Activated CD8-positive, alpha-beta memory T cell treated with anti-CD3 and anti-CD28 coated beads, Interleukin-2, amount 10 ng/mL, durations not matched to agents 7 days and 5 days (primary cell): ENCODE measurements at regions of chr5 and their contacts with region 1.

Region 1: DNA sequence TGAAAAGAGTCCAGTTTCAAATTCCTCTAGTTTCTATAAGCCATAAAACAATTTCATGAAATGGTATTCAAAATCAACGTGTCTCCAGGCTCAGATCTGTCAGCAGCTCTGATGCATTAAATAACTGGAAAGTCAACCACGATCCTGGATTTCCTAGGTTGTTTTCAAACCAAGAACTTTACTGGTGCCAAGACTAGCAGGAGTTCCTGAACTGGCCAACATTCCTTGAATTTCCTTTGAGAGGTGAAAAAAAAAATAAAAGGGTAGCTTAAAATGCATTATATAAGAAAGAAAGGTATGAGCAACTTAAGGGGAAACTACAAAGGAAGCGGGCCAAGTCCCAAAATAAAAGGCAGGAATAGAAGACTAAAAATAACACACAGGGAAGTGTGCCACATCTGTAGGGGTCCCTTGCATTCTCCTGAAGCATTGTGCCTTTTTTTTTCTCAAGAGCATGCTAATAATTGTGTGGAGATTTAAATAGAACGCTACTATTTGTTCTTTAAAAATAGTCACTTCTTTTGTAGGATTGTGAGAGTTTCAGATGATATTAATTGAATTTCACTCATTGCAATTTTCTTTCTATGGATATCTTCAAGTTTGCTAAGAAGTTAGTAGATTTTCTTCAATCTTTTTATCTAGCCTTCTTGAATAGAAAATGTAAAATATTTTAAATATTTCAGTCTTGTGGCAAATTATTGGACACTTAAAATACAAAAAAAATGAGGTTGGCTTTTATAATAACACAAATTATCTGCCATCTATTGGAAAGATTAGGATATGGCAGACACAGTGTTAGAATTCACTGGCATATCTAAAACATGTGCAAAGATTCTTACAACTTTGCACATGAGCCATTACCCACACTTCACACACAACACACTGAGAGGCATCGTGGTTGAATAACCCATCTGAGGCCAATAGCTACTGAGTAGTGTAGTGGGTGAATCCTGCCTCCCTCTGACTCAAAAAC is 15.3 kb downstream of the ESM1 start:
- DNase-seq: no peak
- ATAC-seq: no peak
- H3K4me3 Mint-ChIP-seq: no peak overlapping the region
- H3K27ac Mint-ChIP-seq: no peak overlapping the region
- H3K4me1 Mint-ChIP-seq: no peaks in the 10 kb centered on the region
- H3K27me3 Mint-ChIP-seq: peaks cover 3% of the 10 kb centered on the region

Region 2: GRCh38 chr5:54713923-54714581 is 256.1 kb before region 1 on chr5:
- CTCF ChIA-PET with region 1: no interaction called
- DNase-seq: no peak
- ATAC-seq: no peak
- H3K4me3 Mint-ChIP-seq: no peak overlapping the region
- H3K27ac Mint-ChIP-seq: no peak overlapping the region
- H3K4me1 Mint-ChIP-seq: peaks cover 23% of the 10 kb centered on the region
- H3K27me3 Mint-ChIP-seq: peaks cover 2% of the 10 kb centered on the region

Region 3: GRCh38 chr5:54792611-54793404 is 177.3 kb before region 1 on chr5:
- CTCF ChIA-PET with region 1: no interaction called
- DNase-seq: no peak
- ATAC-seq: no peak
- H3K4me3 Mint-ChIP-seq: no peak overlapping the region
- H3K27ac Mint-ChIP-seq: peak overlapping the region; percentile 26
- H3K4me1 Mint-ChIP-seq: peaks cover 30% of the 10 kb centered on the region
- H3K27me3 Mint-ChIP-seq: no peaks in the 10 kb centered on the region

Region 4: GRCh38 chr5:54867310-54867944 is 102.7 kb before region 1 on chr5:
- CTCF ChIA-PET with region 1: no interaction called
- DNase-seq: no peak
- ATAC-seq: peak; percentile 60
- H3K4me3 Mint-ChIP-seq: no peak overlapping the region
- H3K27ac Mint-ChIP-seq: no peak overlapping the region
- H3K4me1 Mint-ChIP-seq: peaks cover 20% of the 10 kb centered on the region
- H3K27me3 Mint-ChIP-seq: peaks cover 71% of the 10 kb centered on the region

Region 5: DNA sequence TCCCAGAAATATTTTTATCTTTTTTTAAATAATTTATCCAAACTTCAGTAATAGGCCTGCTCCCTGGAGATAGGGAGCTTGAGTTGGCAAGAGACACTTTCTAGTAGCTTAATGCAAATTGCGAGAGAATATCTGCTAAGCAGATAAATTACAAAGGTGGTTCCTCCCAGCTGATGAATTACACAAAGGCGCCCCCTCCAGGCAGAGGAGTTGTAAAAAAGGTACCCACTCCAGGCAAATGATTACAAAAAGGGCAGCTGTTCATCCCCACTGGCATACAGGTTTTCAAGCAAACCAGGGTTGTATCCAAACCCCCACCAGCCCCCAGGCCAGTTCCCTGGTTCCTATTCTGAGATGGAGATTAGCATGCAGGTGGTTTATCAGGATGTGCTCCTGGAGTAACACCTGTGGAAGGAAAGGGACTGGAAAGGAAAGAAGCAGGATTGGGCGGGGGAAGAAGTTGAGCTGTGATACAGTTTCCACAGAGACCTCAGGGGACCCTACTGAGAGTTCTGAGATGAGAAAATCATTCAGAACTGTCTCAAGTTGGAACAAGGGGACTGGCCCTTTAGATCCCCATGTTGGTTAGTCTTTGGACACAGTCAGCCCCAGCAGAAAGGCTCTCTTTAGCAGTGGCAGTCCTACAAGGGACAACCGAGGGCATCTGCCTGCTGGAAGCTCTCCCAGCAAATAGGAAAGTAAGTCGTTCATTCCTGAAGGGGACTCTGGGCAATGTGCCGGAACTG is 10.3 kb before region 1 on chr5:
- CTCF ChIA-PET with region 1: interaction called, 10 read pairs
- DNase-seq: peak; percentile 57
- ATAC-seq: no peak
- H3K4me3 Mint-ChIP-seq: no peak overlapping the region
- H3K27ac Mint-ChIP-seq: no peak overlapping the region
- H3K4me1 Mint-ChIP-seq: peaks cover 2% of the 10 kb centered on the region
- H3K27me3 Mint-ChIP-seq: peaks cover 3% of the 10 kb centered on the region